ENCODE measurements at regions of chr3 and their contacts with region 1.

Region 1: DNA sequence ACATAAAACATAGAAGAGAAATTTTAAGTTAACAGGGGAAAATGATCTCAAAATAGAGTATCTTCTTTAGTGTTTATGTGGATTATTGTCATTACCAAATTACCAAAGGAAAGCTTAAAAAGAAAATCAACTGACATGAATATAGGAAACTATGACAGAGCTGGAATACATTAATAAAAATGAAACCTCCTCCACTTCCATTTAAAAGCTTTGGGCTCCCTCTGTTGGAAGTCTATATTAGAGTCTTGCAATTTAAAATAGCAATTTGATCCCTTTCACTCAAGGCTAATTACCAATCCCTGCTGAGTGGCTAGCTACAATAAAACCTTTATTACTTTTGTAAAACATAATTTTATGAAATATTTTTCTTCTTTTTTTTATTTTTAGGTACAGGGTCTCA is 61.4 kb upstream of the IMPG2 start:
- DNase-seq: no peak
- ATAC-seq: peak in 3 of 8 donors; percentile 31 to 47 (median 35)
- H3K4me3 ChIP-seq: no peak overlapping the region
- H3K27ac ChIP-seq: peak overlapping the region in 1 of 10 donors; percentile 32
- H3K4me1 ChIP-seq: peaks cover 5 to 46% (median 31%) of the 10 kb centered on the region in 9 donors
- H3K27me3 ChIP-seq: no peaks in the 10 kb centered on the region
- CTCF ChIP-seq: peak; percentile 18 to 66 (median 55)

Region 2: GRCh38 chr3:101216710-101217465 is 164.9 kb before region 1 on chr3:
- intact Hi-C with region 1: loop called in 6 of 10 experiments (anchors 10 kb)
- DNase-seq: peak; percentile 13 to 27
- ATAC-seq: peak; percentile 74 to 99 (median 92)
- H3K4me3 ChIP-seq: no peak overlapping the region
- H3K27ac ChIP-seq: peak overlapping the region in 3 of 10 donors; percentile 0 to 27 (median 19)
- H3K4me1 ChIP-seq: no peaks in the 10 kb centered on the region
- H3K27me3 ChIP-seq: no peaks in the 10 kb centered on the region
- CTCF ChIP-seq: no peak

Region 3: GRCh38 chr3:101229681-101230080 is 152.1 kb before region 1 on chr3:
- intact Hi-C with region 1: loop called in 8 of 10 experiments (anchors 2 to 10 kb)
- DNase-seq: no peak
- ATAC-seq: peak in 2 of 8 donors; percentile 52 to 62
- H3K4me3 ChIP-seq: no peak overlapping the region
- H3K27ac ChIP-seq: no peak overlapping the region
- H3K4me1 ChIP-seq: no peaks in the 10 kb centered on the region
- H3K27me3 ChIP-seq: no peaks in the 10 kb centered on the region
- CTCF ChIP-seq: peak in 5 of 9 donors; percentile 23 to 41 (median 33)

Region 4: GRCh38 chr3:101531473-101532086 is 149.8 kb after region 1 on chr3:
- intact Hi-C with region 1: no loop called
- DNase-seq: no peak
- ATAC-seq: no peak
- H3K4me3 ChIP-seq: no peak overlapping the region
- H3K27ac ChIP-seq: no peak overlapping the region
- H3K4me1 ChIP-seq: peaks cover 0 to 7% (median 0%) of the 10 kb centered on the region in 9 donors
- H3K27me3 ChIP-seq: no peaks in the 10 kb centered on the region
- CTCF ChIP-seq: no peak

Measured in heart right ventricle (tissue), 16 donors.